Natural killer cell (primary cell): ENCODE measurements at regions of chr6 and their contacts with region 1.

Region 1: GRCh38 chr6:144149891-144150709 is at the start of gene STX11:
- DNase-seq: peak; percentile 69 to 85
- ATAC-seq: peak; percentile 36 to 72 (median 61)
- H3K4me3 ChIP-seq: peak within 1 kb of the TSS; percentile 55
- H3K4me3 Mint-ChIP-seq: peak within 1 kb of the TSS; percentile 91
- H3K27ac ChIP-seq: peak within 1 kb of the TSS; percentile 90
- H3K27ac Mint-ChIP-seq: peak within 1 kb of the TSS; percentile 94 to 96
- H3K4me1 ChIP-seq: peaks cover 16% of the 10 kb centered on the region
- H3K4me1 Mint-ChIP-seq: peaks cover 44 to 47% of the 10 kb centered on the region in 2 donors
- H3K27me3 ChIP-seq: no peaks in the 10 kb centered on the region
- H3K27me3 Mint-ChIP-seq: no peaks in the 10 kb centered on the region
- CTCF ChIP-seq: no peak
- total RNA-seq, gene STX11: 21.9 to 38.3 (median 34.2) TPM

Region 2: DNA sequence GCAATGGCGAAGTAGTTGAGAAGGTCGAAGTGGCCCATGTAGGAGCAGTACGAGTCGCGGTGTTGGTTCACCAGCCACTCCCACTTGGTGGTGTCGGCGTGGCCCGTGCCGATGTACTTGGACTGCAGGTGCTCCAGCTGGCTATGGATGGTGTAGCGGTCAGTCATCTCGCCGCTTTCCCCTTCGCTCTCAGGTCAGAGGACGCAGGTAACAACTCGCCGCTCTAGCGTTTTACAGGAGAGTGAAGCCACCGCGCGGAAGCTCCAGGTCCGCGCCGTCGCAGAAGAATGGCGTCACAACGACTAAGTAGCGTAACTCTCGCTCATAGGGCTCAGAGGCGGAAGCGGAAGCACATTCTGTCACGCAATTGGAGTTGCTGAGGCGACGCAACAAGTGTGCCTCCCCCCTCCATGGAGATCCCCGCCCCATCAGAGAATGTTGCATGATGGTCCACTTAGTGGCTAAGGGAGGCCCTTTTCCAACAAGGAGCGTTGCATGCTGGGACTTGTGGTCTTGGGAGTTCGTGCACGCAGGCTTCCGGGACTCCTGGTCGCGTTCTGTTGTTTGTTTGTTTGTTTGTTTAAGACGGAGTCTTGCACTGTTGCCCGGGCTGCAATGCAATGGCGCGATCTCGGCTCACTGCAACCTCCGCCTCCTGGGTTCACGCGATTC is 54.6 kb before region 1 on chr6 and contains the start of gene SF3B5:
- intact Hi-C with region 1: loop called (anchors 1 kb)
- DNase-seq: peak; percentile 96 to 100
- ATAC-seq: peak; percentile 96 to 99 (median 97)
- H3K4me3 ChIP-seq: peak within 1 kb of the TSS; percentile 88
- H3K4me3 Mint-ChIP-seq: peak within 1 kb of the TSS; percentile 94
- H3K27ac ChIP-seq: peak within 1 kb of the TSS; percentile 90
- H3K27ac Mint-ChIP-seq: peak within 1 kb of the TSS; percentile 95 to 97
- H3K4me1 ChIP-seq: peaks cover 17% of the 10 kb centered on the region
- H3K4me1 Mint-ChIP-seq: peaks cover 23 to 28% of the 10 kb centered on the region in 2 donors
- H3K27me3 ChIP-seq: no peaks in the 10 kb centered on the region
- H3K27me3 Mint-ChIP-seq: no peaks in the 10 kb centered on the region
- CTCF ChIP-seq: no peak
- total RNA-seq, gene SF3B5: 122 to 145 (median 122) TPM

Region 3: GRCh38 chr6:144197919-144198318 is 47.8 kb after region 1 on chr6:
- intact Hi-C with region 1: loop called (anchors 2 kb)
- DNase-seq: peak; percentile 46 to 64
- ATAC-seq: peak; percentile 84 to 93 (median 87)
- H3K4me3 ChIP-seq: no peak overlapping the region
- H3K4me3 Mint-ChIP-seq: peak overlapping the region; percentile 65
- H3K27ac ChIP-seq: no peak overlapping the region
- H3K27ac Mint-ChIP-seq: peak overlapping the region; percentile 61 to 73
- H3K4me1 ChIP-seq: peaks cover 16% of the 10 kb centered on the region
- H3K4me1 Mint-ChIP-seq: peaks cover 17 to 23% of the 10 kb centered on the region in 2 donors
- H3K27me3 ChIP-seq: no peaks in the 10 kb centered on the region
- H3K27me3 Mint-ChIP-seq: peaks cover 3 to 9% of the 10 kb centered on the region in 2 donors
- CTCF ChIP-seq: no peak

Region 4: DNA sequence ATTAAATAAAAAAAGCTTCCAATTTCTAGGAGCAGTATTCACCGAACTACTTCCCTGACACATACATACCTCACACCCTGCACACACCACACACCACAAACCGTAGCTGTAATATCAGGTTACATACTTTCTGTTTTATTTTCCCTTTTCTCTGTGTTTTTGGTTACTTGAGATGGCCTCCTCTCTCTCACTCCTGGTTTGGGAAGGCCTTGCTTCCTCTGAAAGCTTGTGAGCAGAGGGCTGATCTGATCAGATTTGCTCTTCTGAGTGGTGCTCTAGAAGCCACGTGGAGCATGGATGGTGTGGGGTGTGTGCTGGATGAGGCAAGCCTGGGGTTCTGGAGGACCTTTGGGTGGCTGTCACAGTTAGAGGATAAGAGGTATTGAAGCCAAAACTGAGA is 155.9 kb after region 1 on chr6:
- intact Hi-C with region 1: loop called (anchors 10 kb)
- DNase-seq: peak; percentile 54 to 74
- ATAC-seq: peak; percentile 66 to 82 (median 77)
- H3K4me3 ChIP-seq: no peak overlapping the region
- H3K4me3 Mint-ChIP-seq: peak overlapping the region; percentile 85
- H3K27ac ChIP-seq: peak overlapping the region; percentile 80
- H3K27ac Mint-ChIP-seq: peak overlapping the region; percentile 89 to 95
- H3K4me1 ChIP-seq: peaks cover 35% of the 10 kb centered on the region
- H3K4me1 Mint-ChIP-seq: peaks cover 72 to 73% of the 10 kb centered on the region in 2 donors
- H3K27me3 ChIP-seq: no peaks in the 10 kb centered on the region
- H3K27me3 Mint-ChIP-seq: no peaks in the 10 kb centered on the region
- CTCF ChIP-seq: no peak